CD4-positive, alpha-beta memory T cell (primary cell): ENCODE measurements at regions of chr6 and their contacts with region 1.

Region 1: GRCh38 chr6:43723737-43724295 is 36.2 kb upstream of the MRPS18A start:
- DNase-seq: peak; percentile 59 to 72 (median 62)
- H3K4me3 ChIP-seq: no peak overlapping the region
- H3K4me3 Mint-ChIP-seq: peak overlapping the region in 1 of 8 donors; percentile 17
- H3K27ac ChIP-seq: no peak overlapping the region
- H3K27ac Mint-ChIP-seq: peak overlapping the region in 6 of 7 donors; percentile 1 to 92 (median 38)
- H3K4me1 ChIP-seq: peaks cover 28% of the 10 kb centered on the region
- H3K4me1 Mint-ChIP-seq: peaks cover 18 to 45% (median 29%) of the 10 kb centered on the region in 4 donors
- H3K27me3 ChIP-seq: no peaks in the 10 kb centered on the region
- H3K27me3 Mint-ChIP-seq: no peaks in the 10 kb centered on the region

Region 2: GRCh38 chr6:43708860-43709653 is 14.8 kb before region 1 on chr6:
- CTCF ChIA-PET with region 1: no interaction called
- POLR2A ChIA-PET with region 1: no interaction called
- intact Hi-C with region 1: no loop called
- DNase-seq: no peak
- H3K4me3 ChIP-seq: no peak overlapping the region
- H3K4me3 Mint-ChIP-seq: no peak overlapping the region
- H3K27ac ChIP-seq: no peak overlapping the region
- H3K27ac Mint-ChIP-seq: peak overlapping the region in 1 of 7 donors; percentile 43
- H3K4me1 ChIP-seq: peaks cover 4% of the 10 kb centered on the region
- H3K4me1 Mint-ChIP-seq: peaks cover 0 to 5% (median 1%) of the 10 kb centered on the region in 4 donors
- H3K27me3 ChIP-seq: no peaks in the 10 kb centered on the region
- H3K27me3 Mint-ChIP-seq: peaks cover 16 to 35% of the 10 kb centered on the region in 2 donors

Region 3: GRCh38 chr6:43774776-43775534 is 51.1 kb after region 1 on chr6:
- CTCF ChIA-PET with region 1: interaction called, 34 read pairs
- POLR2A ChIA-PET with region 1: interaction called, 3 read pairs
- intact Hi-C with region 1: loop called (anchors 1 kb)
- DNase-seq: peak; percentile 38 to 67 (median 45)
- H3K4me3 ChIP-seq: no peak overlapping the region
- H3K4me3 Mint-ChIP-seq: peak overlapping the region in 3 of 8 donors; percentile 3 to 67 (median 43)
- H3K27ac ChIP-seq: no peak overlapping the region
- H3K27ac Mint-ChIP-seq: peak overlapping the region in 1 of 7 donors; percentile 48
- H3K4me1 ChIP-seq: peaks cover 17% of the 10 kb centered on the region
- H3K4me1 Mint-ChIP-seq: peaks cover 6 to 34% (median 19%) of the 10 kb centered on the region in 4 donors
- H3K27me3 ChIP-seq: peaks cover 5% of the 10 kb centered on the region
- H3K27me3 Mint-ChIP-seq: peaks cover 15% of the 10 kb centered on the region in 2 donors

Region 4: DNA sequence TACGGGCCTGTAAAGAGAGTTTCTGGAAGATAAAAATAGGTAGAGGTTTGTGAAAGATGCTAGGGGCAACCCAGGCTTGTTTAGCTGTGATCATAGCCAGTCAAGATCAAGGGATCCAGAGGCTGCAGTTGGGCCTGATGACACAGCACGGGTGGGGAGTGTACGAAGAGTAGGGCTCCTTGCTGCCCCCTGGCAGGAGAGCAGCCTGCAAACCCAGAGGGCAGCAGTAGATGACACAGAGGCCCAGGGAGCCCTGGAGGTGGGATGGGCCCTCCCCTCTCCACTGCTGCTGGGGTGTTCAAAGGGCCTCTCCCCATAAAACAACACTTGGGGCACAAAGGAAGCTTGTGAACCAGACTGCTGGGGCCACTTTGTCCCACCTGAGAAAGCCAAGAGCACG is 93.4 kb after region 1 on chr6:
- CTCF ChIA-PET with region 1: no interaction called
- POLR2A ChIA-PET with region 1: no interaction called
- intact Hi-C with region 1: loop called (anchors 1 kb)
- DNase-seq: no peak
- H3K4me3 ChIP-seq: no peak overlapping the region
- H3K4me3 Mint-ChIP-seq: no peak overlapping the region
- H3K27ac ChIP-seq: no peak overlapping the region
- H3K27ac Mint-ChIP-seq: no peak overlapping the region
- H3K4me1 ChIP-seq: peaks cover 5% of the 10 kb centered on the region
- H3K4me1 Mint-ChIP-seq: peaks cover 0 to 6% (median 2%) of the 10 kb centered on the region in 4 donors
- H3K27me3 ChIP-seq: no peaks in the 10 kb centered on the region
- H3K27me3 Mint-ChIP-seq: peaks cover 4 to 6% of the 10 kb centered on the region in 2 donors